A673 (cell line): ENCODE measurements at regions of chr3 and their contacts with region 1.

Region 1: DNA sequence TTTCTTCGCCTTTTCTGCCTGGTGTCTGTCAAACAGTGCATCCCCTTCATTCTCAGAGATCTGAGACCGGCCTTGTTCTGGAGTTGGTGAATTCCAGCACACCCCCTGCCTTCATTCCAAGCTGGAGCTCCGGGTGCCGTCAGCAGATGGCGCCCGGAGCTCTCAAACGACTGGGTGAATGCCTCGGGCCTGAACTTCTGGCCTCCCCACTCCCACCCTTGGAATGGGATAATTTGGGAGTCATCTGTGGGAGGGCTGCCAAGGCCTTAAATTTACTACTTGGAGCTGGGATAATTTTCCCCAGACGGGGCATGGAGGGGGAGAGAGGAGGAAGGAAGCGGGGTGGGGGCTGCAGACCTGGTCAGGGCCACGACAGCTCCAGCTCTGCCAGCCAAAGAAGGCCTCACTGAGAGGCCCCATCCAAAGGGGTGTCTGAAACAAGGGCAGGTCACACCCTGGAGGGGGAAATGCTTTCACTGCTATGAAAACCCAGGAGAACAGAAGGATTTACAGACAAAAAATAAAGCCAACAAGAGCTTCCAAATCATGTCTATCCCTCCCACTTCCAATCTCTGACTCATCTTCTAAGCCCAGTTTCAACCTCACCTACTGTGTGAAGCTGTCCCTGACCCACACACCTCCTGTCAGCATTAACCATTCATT is 187.9 kb downstream of the OPA1 start:
- DNase-seq: peak; percentile 95
- H3K4me3 ChIP-seq: no peak overlapping the region
- H3K27ac ChIP-seq: peak overlapping the region; percentile 86
- H3K4me1 ChIP-seq: peaks cover 90% of the 10 kb centered on the region
- H3K27me3 ChIP-seq: no peaks in the 10 kb centered on the region
- CTCF ChIP-seq: peak; percentile 95

Region 2: DNA sequence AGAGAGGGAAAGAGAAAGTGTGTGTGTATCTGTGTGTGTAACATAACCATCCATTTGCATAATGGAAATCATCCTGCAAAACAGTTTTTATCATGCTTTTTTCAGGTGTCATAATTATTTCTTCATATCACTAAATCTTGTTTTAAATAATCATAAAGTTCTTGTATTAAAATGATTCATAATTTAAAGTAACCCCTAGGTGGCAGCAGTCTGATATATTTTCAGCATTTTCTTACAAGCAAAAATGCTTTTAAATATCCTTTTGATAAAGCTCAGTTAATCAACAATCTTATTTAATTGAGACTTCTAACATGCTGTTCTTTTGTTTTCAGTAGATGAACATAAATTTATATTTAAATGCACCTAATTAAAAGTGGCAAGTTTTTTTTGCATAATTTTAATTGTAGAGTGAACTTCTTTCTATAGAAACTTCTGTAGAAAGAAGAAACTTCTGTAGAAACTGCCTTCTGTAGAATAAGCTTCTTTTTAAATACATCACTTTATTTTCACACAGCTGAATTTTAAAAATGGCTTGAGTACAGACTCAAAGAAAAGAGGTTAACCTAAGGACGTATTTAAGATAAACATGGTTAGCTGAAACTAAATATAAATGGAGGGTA is 115.5 kb before region 1 on chr3:
- CTCF ChIA-PET with region 1: interaction called, 3 read pairs
- POLR2A ChIA-PET with region 1: no interaction called
- intact Hi-C with region 1: loop called (anchors 5 kb)
- DNase-seq: peak; percentile 60
- H3K4me3 ChIP-seq: no peak overlapping the region
- H3K27ac ChIP-seq: peak overlapping the region; percentile 44
- H3K4me1 ChIP-seq: peaks cover 37% of the 10 kb centered on the region
- H3K27me3 ChIP-seq: no peaks in the 10 kb centered on the region
- CTCF ChIP-seq: peak; percentile 60

Region 3: DNA sequence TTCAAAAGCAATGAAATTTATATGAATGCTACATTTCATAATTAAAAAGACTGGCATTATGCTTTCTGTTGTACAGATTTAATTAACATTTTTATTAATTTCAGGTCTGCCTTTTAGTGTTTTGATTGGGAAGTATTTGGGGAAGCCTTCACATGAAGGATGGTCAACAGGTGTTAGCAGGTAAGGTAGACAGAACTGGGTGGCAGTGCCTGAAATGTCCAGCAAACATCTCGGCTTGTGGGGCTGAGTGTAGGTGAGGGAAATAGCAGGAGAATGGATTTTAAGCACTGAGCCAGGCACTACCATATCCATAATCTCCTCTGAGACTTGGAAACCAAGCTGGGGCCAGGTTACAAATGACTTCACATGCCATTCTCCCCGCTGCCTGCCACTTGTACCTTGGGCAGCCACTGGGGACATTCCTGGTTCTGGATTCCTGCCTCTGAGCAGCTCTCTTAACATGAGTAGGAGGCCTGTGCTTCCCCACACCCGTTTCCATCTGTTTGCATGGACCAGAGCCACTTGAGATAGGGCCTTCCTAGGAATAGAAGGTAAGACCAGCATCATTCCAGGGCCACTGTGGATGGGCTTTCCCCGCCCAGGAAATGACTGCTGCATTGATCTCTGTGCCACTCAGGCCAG is 229.1 kb after region 1 on chr3:
- CTCF ChIA-PET with region 1: no interaction called
- POLR2A ChIA-PET with region 1: no interaction called
- intact Hi-C with region 1: loop called (anchors 5 kb)
- DNase-seq: no peak
- H3K4me3 ChIP-seq: no peak overlapping the region
- H3K27ac ChIP-seq: no peak overlapping the region
- H3K4me1 ChIP-seq: peaks cover 30% of the 10 kb centered on the region
- H3K27me3 ChIP-seq: no peaks in the 10 kb centered on the region
- CTCF ChIP-seq: no peak

Region 4: GRCh38 chr3:194070634-194071409 is 289.9 kb after region 1 on chr3:
- CTCF ChIA-PET with region 1: no interaction called
- POLR2A ChIA-PET with region 1: no interaction called
- intact Hi-C with region 1: no loop called
- DNase-seq: peak; percentile 93
- H3K4me3 ChIP-seq: peak overlapping the region; percentile 42
- H3K27ac ChIP-seq: peak overlapping the region; percentile 74
- H3K4me1 ChIP-seq: peaks cover 15% of the 10 kb centered on the region
- H3K27me3 ChIP-seq: no peaks in the 10 kb centered on the region
- CTCF ChIP-seq: no peak

Region 5: GRCh38 chr3:194089357-194090177 is 308.6 kb after region 1 on chr3:
- CTCF ChIA-PET with region 1: interaction called, 3 read pairs
- POLR2A ChIA-PET with region 1: no interaction called
- intact Hi-C with region 1: loop called (anchors 2 kb)
- DNase-seq: peak; percentile 99
- H3K4me3 ChIP-seq: no peak overlapping the region
- H3K27ac ChIP-seq: peak overlapping the region; percentile 94
- H3K4me1 ChIP-seq: peaks cover 80% of the 10 kb centered on the region
- H3K27me3 ChIP-seq: no peaks in the 10 kb centered on the region
- CTCF ChIP-seq: no peak

Region 6: GRCh38 chr3:194141415-194142155 is 360.6 kb after region 1 on chr3:
- CTCF ChIA-PET with region 1: interaction called, 11 read pairs
- POLR2A ChIA-PET with region 1: no interaction called
- intact Hi-C with region 1: loop called (anchors 2 kb)
- DNase-seq: peak; percentile 93
- H3K4me3 ChIP-seq: peak overlapping the region; percentile 93
- H3K27ac ChIP-seq: peak overlapping the region; percentile 98
- H3K4me1 ChIP-seq: peaks cover 26% of the 10 kb centered on the region
- H3K27me3 ChIP-seq: no peaks in the 10 kb centered on the region
- CTCF ChIP-seq: no peak

Region 7: GRCh38 chr3:195259475-195260279 is 1478.7 kb after region 1 on chr3:
- CTCF ChIA-PET with region 1: no interaction called
- POLR2A ChIA-PET with region 1: no interaction called
- intact Hi-C with region 1: no loop called
- DNase-seq: peak; percentile 95
- H3K4me3 ChIP-seq: peak overlapping the region; percentile 76
- H3K27ac ChIP-seq: peak overlapping the region; percentile 93
- H3K4me1 ChIP-seq: peaks cover 60% of the 10 kb centered on the region
- H3K27me3 ChIP-seq: no peaks in the 10 kb centered on the region
- CTCF ChIP-seq: peak; percentile 34; the same call in 1 of the 2 replicates